A673 (cell line): ENCODE measurements at regions of chr16 and their contacts with region 1.

Region 1: GRCh38 chr16:17747081-17747756 is 276.5 kb upstream of the XYLT1 start:
- DNase-seq: no peak
- H3K4me3 ChIP-seq: no peak overlapping the region
- H3K27ac ChIP-seq: no peak overlapping the region
- H3K4me1 ChIP-seq: no peaks in the 10 kb centered on the region
- H3K27me3 ChIP-seq: no peaks in the 10 kb centered on the region
- CTCF ChIP-seq: no peak

Region 2: GRCh38 chr16:17556276-17557052 is 190.8 kb before region 1 on chr16:
- CTCF ChIA-PET with region 1: no interaction called
- POLR2A ChIA-PET with region 1: no interaction called
- intact Hi-C with region 1: no loop called
- DNase-seq: peak; percentile 32
- H3K4me3 ChIP-seq: no peak overlapping the region
- H3K27ac ChIP-seq: no peak overlapping the region
- H3K4me1 ChIP-seq: no peaks in the 10 kb centered on the region
- H3K27me3 ChIP-seq: no peaks in the 10 kb centered on the region
- CTCF ChIP-seq: peak; percentile 58

Region 3: GRCh38 chr16:17803625-17804024 is 56.4 kb after region 1 on chr16:
- CTCF ChIA-PET with region 1: no interaction called
- POLR2A ChIA-PET with region 1: interaction called, 22 read pairs
- intact Hi-C with region 1: no loop called
- DNase-seq: no peak
- H3K4me3 ChIP-seq: no peak overlapping the region
- H3K27ac ChIP-seq: no peak overlapping the region
- H3K4me1 ChIP-seq: no peaks in the 10 kb centered on the region
- H3K27me3 ChIP-seq: no peaks in the 10 kb centered on the region
- CTCF ChIP-seq: no peak

Region 4: DNA sequence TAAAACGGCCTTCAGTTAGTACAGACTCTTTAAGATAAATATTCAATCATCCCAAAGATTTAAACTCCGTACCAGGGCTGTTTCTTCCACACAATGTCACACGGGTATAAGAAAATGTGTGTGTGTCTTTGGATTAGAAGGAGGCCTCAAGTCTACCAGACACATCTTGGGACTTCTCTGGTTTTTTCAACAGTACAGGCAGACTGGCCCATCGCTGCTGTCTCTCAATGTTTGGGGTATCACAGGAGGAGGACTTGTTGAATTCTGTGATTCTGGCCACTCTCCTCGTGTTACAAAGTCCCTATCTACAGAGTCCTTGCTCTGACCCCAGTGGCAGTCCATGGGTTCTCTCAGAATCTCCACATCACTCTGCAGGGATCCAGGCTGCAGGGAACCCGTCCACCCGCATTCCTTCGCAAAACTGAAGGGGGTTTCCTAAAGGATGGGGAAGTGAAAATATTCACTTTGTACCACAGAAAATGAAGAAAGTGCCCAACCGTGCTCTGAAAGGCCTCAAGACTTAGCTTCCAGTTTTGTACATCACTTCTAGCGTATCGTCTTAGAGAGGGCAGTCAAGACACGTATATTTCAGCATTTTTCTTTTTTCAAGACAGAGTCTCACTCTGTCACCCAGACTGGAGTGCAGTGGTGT is 216.1 kb after region 1 on chr16:
- CTCF ChIA-PET with region 1: no interaction called
- POLR2A ChIA-PET with region 1: no interaction called
- intact Hi-C with region 1: no loop called
- DNase-seq: no peak
- H3K4me3 ChIP-seq: no peak overlapping the region
- H3K27ac ChIP-seq: no peak overlapping the region
- H3K4me1 ChIP-seq: no peaks in the 10 kb centered on the region
- H3K27me3 ChIP-seq: no peaks in the 10 kb centered on the region
- CTCF ChIP-seq: no peak